AG04449 (cell line): ENCODE measurements at regions of chr6 and their contacts with region 1.

Region 1: DNA sequence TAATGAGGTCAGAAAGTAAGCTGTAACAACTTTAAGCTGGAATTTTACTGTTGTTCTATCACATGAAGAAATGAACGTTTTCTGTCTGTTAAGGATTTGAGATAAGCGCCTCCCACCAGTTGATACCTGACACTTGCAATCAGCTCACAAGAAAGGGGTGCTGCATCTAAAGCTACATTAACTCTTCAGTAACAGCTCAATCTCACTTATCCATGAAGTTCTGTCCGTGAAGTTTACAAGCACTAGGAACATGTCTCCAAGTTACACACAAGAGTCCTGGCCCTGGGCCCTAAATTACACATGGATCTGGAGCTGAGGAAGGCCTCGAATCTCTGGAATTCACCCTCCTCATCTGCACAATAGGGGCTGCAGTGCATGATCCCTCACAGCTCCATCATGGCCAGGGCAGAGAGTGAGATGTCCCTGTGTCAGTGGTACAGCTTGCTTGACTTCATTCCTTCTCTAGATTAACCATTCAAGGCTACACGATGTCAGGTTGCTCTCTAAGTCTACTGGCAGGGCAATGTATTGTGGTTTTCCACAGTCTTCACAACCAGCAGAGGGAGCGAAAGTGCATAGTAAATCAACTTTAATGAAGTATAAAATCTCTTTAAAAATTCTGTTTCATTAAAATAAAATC is 182.4 kb upstream of the MCHR2 start:
- DNase-seq: peak; percentile 49
- H3K4me3 ChIP-seq: no peak overlapping the region
- CTCF ChIP-seq: peak; percentile 47

Region 2: DNA sequence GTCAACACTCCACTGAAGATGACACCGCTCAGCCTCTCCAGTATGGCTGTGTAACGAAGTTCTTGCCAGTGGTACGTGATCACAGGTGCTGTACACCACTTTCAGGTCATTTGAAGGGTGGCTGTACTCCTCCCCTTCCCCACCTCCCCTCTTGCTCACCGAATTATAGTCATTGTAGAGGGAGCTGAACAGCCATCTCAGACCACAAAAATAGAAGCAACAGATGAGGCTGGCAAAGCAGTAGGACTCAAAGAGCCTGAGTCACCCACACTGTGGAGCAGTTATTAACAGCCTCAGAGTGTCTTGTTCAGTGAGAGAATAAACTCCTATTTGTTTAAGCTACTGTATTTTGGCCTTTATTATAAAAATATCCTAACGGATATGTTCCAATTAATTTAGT is 10.1 kb after region 1 on chr6:
- CTCF ChIA-PET with region 1: interaction called, 19 read pairs
- POLR2A ChIA-PET with region 1: no interaction called
- DNase-seq: peak; percentile 28
- H3K4me3 ChIP-seq: no peak overlapping the region
- CTCF ChIP-seq: no peak

Region 3: GRCh38 chr6:100209323-100210136 is 33.1 kb after region 1 on chr6:
- CTCF ChIA-PET with region 1: interaction called, 10 read pairs
- POLR2A ChIA-PET with region 1: interaction called, 4 read pairs
- DNase-seq: no peak
- H3K4me3 ChIP-seq: no peak overlapping the region
- CTCF ChIP-seq: no peak

Region 4: GRCh38 chr6:100464903-100465700 is 288.7 kb after region 1 on chr6 and contains the start of gene SIM1:
- CTCF ChIA-PET with region 1: interaction called, 45 read pairs
- POLR2A ChIA-PET with region 1: interaction called, 5 read pairs
- DNase-seq: peak; percentile 74
- H3K4me3 ChIP-seq: peak within 1 kb of the TSS; percentile 83
- CTCF ChIP-seq: no peak

Region 5: DNA sequence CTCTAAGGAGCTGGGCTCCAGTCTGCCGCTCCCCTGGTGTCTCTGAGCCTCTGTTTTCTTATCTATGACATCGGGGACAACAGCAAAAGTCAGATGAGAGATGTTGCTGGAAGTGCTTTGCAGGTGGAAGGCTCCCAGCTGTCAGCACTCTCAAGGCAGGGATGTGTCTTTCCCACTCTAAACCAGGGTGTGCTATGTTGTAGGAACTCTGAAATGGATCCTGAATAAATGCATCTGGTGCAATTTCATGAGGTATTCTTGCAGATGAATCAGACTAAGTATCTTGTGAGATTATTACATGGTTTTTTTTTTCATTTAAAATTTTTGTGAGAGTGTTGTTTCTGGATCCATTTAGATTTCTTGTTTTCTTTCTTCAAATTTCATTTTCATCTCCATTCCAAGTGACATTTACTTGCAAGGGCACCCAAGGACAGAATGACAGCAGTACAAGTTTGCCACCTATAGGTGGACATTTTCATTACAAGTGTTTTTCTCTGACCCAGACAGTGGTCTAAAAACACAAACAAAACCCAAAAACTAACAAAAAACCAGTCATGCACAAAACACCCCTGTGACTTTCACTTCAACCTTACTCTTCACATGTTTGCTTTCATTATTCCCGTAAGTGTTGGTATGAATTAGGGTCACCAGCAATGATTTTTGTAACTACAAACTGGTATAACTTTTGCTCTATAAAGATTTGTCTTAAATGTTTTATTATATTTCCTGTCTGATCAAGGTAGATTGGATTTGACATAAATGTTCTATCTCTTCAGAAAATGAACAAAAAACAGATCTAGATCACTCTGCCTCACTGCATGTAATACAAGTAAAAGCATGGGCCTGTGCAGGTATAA is 303.0 kb after region 1 on chr6:
- CTCF ChIA-PET with region 1: interaction called, 18 read pairs
- POLR2A ChIA-PET with region 1: no interaction called
- DNase-seq: no peak
- H3K4me3 ChIP-seq: no peak overlapping the region
- CTCF ChIP-seq: peak; percentile 36

Region 6: DNA sequence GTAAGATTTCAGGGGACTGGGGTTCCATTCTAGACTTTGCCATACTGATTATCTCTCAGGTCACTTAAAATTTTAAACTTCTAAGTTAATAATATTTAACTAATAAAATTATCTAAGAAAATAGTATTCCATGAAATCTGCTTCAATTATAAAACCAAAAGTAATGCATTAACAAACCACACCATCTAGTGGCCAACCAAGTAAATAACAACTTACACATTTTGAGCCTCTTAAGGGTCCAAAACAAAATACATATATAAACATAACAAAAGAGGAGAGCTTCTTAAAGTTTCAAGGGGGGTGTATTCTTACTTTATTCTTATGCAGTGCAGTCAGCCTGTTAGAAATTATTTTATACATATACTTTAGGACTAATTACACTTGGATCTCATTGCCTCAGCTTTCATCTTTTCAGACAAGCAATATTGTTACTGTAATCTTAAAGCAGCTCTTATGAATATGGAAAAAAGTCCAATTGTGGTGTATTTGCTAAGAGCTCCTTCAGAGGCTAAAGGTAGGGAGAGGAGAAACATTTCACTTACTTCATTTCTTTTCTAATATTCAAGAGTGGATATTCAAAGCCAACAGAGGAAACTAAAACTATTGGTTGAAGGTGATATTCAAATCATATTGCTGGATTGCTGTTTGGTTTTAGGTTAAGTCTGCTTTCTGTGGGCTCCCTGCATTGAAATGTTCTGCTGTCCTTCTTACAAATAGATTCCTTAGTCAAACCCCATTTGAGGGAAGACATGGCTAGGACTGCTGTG is 488.0 kb after region 1 on chr6:
- CTCF ChIA-PET with region 1: interaction called, 11 read pairs
- POLR2A ChIA-PET with region 1: no interaction called
- DNase-seq: no peak
- H3K4me3 ChIP-seq: no peak overlapping the region
- CTCF ChIP-seq: peak; percentile 37